AG04450 (cell line): ENCODE measurements at regions of chr16 and their contacts with region 1.

Region 1: GRCh38 chr16:9090960-9091866 is at the start of gene HAPSTR1:
- DNase-seq: peak; percentile 100
- H3K4me3 ChIP-seq: peak within 1 kb of the TSS; percentile 96
- H3K27ac ChIP-seq: peak within 1 kb of the TSS; percentile 65
- H3K27me3 ChIP-seq: no peaks in the 10 kb centered on the region
- CTCF ChIP-seq: no peak
- polyA plus RNA-seq, gene HAPSTR1: 38.1 and 40.3 TPM in 2 replicates

Region 2: GRCh38 chr16:8634991-8635736 is 456.0 kb before region 1 on chr16:
- CTCF ChIA-PET with region 1: no interaction called
- POLR2A ChIA-PET with region 1: no interaction called
- DNase-seq: no peak
- H3K4me3 ChIP-seq: no peak overlapping the region
- H3K27ac ChIP-seq: no peak overlapping the region
- H3K27me3 ChIP-seq: no peaks in the 10 kb centered on the region
- CTCF ChIP-seq: peak; percentile 63

Region 3: DNA sequence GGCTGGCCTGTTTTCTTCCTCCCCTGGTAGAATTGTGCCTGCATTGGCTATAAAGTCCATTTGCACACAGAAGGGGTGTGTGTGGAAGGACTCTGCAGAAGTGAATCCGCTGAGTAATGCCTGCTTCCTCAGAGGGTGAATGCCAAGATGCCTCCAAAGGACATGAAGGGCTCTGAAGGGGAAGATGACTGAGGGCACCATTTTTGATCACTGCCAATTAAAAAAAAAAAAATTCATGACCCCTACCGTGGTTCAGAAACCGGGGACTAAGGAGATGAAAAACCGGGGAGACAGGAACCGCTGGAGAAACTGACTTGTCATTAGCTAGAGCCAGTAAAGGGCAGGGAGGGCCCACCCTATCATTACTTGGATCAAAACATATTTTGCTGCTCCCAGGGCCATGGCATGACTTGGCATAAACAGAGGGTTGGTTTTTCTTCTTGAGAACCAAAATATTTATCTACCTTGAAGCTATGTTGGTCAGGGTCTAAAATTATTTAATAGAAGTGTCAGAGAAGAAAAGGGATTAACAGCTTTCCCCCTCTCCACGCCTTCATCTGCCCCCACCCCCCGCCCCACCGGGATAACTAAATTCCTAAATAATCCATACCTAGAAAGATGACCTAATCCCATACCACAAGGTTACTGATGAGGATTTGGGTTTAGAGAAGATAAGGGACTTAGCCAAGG is 123.9 kb before region 1 on chr16:
- CTCF ChIA-PET with region 1: no interaction called
- POLR2A ChIA-PET with region 1: interaction called, 10 read pairs
- DNase-seq: no peak
- H3K4me3 ChIP-seq: no peak overlapping the region
- H3K27ac ChIP-seq: no peak overlapping the region
- H3K27me3 ChIP-seq: no peaks in the 10 kb centered on the region
- CTCF ChIP-seq: no peak

Region 4: GRCh38 chr16:9047686-9048301 is 43.4 kb before region 1 on chr16:
- CTCF ChIA-PET with region 1: interaction called, 3 read pairs
- POLR2A ChIA-PET with region 1: interaction called, 36 read pairs
- DNase-seq: peak; percentile 98
- H3K4me3 ChIP-seq: no peak overlapping the region
- H3K27ac ChIP-seq: peak overlapping the region; percentile 99
- H3K27me3 ChIP-seq: no peaks in the 10 kb centered on the region
- CTCF ChIP-seq: no peak

Region 5: GRCh38 chr16:9061358-9061813 is 29.8 kb before region 1 on chr16:
- CTCF ChIA-PET with region 1: interaction called, 6 read pairs
- POLR2A ChIA-PET with region 1: interaction called, 19 read pairs
- DNase-seq: peak; percentile 74
- H3K4me3 ChIP-seq: no peak overlapping the region
- H3K27ac ChIP-seq: peak overlapping the region; percentile 52
- H3K27me3 ChIP-seq: no peaks in the 10 kb centered on the region
- CTCF ChIP-seq: no peak

Region 6: GRCh38 chr16:9072806-9073341 is 18.3 kb before region 1 on chr16:
- CTCF ChIA-PET with region 1: interaction called, 3 read pairs
- POLR2A ChIA-PET with region 1: interaction called, 24 read pairs
- DNase-seq: peak; percentile 83
- H3K4me3 ChIP-seq: 0 out of 2 replicates have a peak overlapping the region, but pooled peaks have one; percentile 15
- H3K27ac ChIP-seq: peak overlapping the region; percentile 87
- H3K27me3 ChIP-seq: no peaks in the 10 kb centered on the region
- CTCF ChIP-seq: no peak

Region 7: GRCh38 chr16:9079430-9079812 is 11.8 kb before region 1 on chr16:
- CTCF ChIA-PET with region 1: interaction called, 3 read pairs
- POLR2A ChIA-PET with region 1: interaction called, 20 read pairs
- DNase-seq: no peak
- H3K4me3 ChIP-seq: no peak overlapping the region
- H3K27ac ChIP-seq: no peak overlapping the region
- H3K27me3 ChIP-seq: no peaks in the 10 kb centered on the region
- CTCF ChIP-seq: no peak

Region 8: DNA sequence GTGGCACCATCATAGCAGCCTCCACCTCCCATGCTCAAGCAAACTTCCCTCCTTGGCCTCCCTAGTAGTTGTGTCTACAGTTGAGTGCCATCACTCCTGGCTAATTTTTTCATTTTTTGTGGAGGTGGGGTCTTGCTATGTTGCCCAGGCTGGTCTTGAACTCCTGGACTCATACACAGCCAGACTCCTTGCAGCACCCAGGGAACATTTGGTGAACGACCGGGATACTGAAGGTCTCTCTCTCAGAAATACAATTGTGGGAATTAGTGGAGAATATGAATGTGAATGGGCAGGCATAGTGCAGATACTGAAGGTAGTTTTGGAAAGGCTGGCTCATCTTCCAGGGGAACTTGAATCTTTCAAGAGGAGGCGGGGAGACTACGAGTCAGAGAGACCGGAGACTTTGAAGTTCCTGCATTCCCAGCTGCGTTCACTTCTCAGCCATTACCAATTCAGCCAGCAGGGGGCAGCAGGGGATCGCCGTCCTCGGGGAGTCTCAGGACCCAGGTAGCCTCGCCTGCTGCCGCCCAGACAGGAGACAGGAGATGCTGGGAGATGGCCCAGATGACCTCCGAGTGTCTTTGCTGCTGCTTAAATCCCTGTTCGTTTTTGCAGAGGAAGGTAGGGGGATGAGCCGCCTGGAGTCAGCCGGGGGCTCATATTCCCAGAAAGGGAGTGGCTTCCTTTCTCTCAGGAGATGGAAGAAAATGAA is 68.8 kb after region 1 on chr16:
- CTCF ChIA-PET with region 1: no interaction called
- POLR2A ChIA-PET with region 1: no interaction called
- DNase-seq: peak; percentile 39
- H3K4me3 ChIP-seq: no peak overlapping the region
- H3K27ac ChIP-seq: no peak overlapping the region
- H3K27me3 ChIP-seq: no peaks in the 10 kb centered on the region
- CTCF ChIP-seq: peak; percentile 80